Upper lobe of right lung (tissue), 1 donor: ENCODE measurements at regions of chr16 and their contacts with region 1.

Region 1: DNA sequence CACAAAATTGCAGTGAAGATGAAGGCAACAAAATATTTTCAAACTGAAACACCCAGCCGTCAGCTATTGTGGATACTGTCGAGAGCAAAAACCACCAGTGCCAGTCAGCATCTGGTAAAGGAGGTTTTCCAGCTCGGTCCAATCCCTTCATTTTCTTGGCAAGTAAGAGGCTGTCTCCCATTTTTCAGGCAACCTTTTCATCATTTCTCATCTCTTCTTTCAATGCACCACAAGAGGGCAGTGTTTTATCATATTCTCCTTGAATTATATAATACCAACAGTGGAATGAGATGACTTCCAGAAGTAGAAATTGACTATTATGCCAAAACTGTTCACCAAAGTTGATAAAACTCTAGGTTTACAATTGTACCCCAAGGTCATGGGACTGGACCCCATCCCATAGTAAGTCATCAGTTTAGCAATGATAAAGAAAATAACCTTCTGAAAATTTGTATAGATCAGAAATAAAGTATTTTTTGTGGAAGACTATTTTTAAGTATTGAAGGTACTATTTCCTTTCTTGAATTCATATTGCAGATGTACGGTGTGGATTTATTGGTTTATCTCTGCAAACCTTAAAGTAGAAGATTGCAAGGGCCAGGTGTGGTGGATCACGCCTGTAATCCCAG is 16.8 kb downstream of the NQO1 start:
- DNase-seq: no peak
- ATAC-seq: peak; percentile 71
- H3K4me3 ChIP-seq: no peak overlapping the region
- H3K27ac ChIP-seq: no peak overlapping the region
- H3K4me1 ChIP-seq: no peaks in the 10 kb centered on the region
- H3K27me3 ChIP-seq: no peaks in the 10 kb centered on the region
- CTCF ChIP-seq: peak; percentile 74

Region 2: GRCh38 chr16:69754469-69755310 is 45.1 kb after region 1 on chr16 and contains the start of gene NOB1:
- intact Hi-C with region 1: loop called (anchors 5 kb)
- DNase-seq: peak; percentile 99
- ATAC-seq: peak; percentile 99
- H3K4me3 ChIP-seq: peak within 1 kb of the TSS; percentile 97
- H3K27ac ChIP-seq: peak within 1 kb of the TSS; percentile 85
- H3K4me1 ChIP-seq: peaks cover 18% of the 10 kb centered on the region
- H3K27me3 ChIP-seq: no peaks in the 10 kb centered on the region
- CTCF ChIP-seq: peak; percentile 97
- total RNA-seq, gene NOB1: 32.0 TPM